K562 (cell line): ENCODE measurements at regions of chr15 and their contacts with region 1.

Region 1: GRCh38 chr15:65980824-65981456 is 111.6 kb downstream of the RAB11A start:
- DNase-seq: peak; percentile 62 to 73 (median 64)
- ATAC-seq: peak; percentile 86
- H3K4me3 ChIP-seq: no peak overlapping the region
- H3K27ac ChIP-seq: no peak overlapping the region
- H3K4me1 ChIP-seq: peaks cover 0 to 11% of the 10 kb centered on the region in 2 experiments; a peak in 2 of 5 replicates
- H3K27me3 ChIP-seq: peaks cover 26 to 59% of the 10 kb centered on the region in 2 experiments
- CTCF ChIP-seq: peak; percentile 67 to 81 (median 80)
- EP300 ChIP-seq: no peak
- POLR2A ChIP-seq: no peak
- RAD21 ChIP-seq: peak; percentile 48 to 73

Region 2: DNA sequence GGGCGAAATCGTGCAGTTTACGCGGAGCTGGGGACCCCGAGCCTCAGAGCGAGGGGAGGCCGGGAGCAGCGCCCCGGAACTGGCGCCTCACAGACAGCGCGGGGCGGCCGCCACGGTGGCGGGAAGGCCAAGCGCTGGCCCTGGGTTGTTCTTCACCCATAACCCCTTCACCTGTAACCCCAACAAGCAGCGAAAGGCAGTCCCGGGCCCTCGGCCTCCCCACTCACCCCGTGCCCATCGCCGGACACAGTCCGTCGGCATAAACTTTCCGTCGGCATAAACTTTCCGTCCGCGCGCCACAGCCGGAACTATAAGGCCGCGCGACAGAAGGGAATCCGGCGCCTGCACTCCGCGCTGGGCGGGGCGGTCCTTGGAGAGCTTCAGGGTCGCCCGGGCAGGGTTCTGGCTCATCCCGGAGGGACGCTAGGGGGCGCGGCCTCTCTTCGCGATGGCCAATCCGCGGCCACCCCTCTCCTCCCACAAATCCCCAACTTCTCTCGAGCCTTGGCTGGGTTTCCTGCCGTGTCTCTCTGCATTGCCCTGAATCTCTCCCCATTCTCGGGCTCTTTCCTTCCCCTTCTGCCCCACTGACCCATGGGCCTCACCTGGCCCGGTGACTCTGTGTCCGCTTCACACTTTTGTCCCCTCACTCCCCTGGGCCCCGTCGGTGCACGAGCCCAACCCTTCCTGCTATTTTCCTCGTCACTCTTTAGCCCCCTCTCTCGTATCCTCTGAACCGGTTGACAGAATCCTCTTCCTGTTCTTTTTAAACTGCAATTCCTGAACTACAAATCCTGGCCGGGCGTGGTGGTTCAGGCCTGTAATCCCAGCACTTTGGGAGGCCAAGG is 369.8 kb before region 1 on chr15 and contains the start of gene INTS14:
- CTCF ChIA-PET with region 1: no interaction called
- POLR2A ChIA-PET with region 1: no interaction called
- in situ Hi-C with region 1: no loop called
- intact Hi-C with region 1: loop called (anchors 10 kb)
- DNase-seq: peak; percentile 97 to 98 (median 97)
- ATAC-seq: peak; percentile 98
- H3K4me3 ChIP-seq: peak within 1 kb of the TSS; percentile 64
- H3K27ac ChIP-seq: peak within 1 kb of the TSS; percentile 89
- H3K4me1 ChIP-seq: peaks cover 8 to 21% of the 10 kb centered on the region in 2 experiments; a peak in 4 of 5 replicates
- H3K27me3 ChIP-seq: no peaks in the 10 kb centered on the region
- CTCF ChIP-seq: peak; percentile 72 to 85 (median 80)
- EP300 ChIP-seq: peak; percentile 63
- POLR2A ChIP-seq: peak; percentile 96
- RAD21 ChIP-seq: peak in 1 of 2 experiments; percentile 80
- polyA plus RNA-seq, gene INTS14: 40.6 to 64.0 TPM

Region 3: DNA sequence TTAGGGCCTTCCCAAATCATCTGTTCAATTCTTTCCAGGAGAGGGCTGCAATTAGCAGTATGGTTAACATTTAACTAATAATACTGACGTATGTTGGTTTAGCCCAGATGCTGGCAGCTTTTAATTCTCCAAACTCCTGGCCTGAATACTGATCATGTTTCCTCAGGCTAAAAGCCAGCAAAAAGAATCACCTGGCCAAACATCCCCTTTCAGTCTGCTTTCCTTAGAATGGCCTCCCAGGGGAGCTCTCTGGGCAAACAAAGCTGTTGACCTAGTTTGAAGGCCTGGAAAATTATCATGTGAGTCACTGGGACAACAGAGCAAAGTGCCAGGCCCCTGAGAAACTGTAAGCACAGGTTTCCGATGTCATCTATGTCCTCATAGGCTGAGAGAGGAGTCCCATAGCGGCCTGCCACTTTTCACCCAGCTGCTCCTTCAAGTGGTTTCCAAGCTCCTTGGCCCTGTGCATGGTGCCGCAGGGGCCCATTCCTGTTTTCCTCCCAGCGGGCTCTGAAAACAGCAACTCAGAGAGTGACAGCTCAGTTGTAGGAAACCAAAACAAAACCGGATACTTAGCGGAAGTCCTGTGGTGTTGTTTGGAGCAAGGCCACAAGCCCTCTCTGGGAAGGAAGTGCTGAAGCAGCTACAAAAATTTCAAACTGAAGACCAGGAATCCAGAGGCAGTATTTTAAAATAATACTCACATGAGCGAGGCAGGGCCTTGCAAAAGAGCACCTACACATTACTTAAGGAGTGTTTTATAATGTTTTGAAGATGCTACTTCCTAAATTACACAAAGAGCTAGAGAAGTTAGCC is 148.2 kb before region 1 on chr15:
- CTCF ChIA-PET with region 1: no interaction called
- POLR2A ChIA-PET with region 1: no interaction called
- in situ Hi-C with region 1: no loop called
- intact Hi-C with region 1: no loop called
- DNase-seq: peak; percentile 65 to 83 (median 70)
- ATAC-seq: peak; percentile 76
- H3K4me3 ChIP-seq: no peak overlapping the region; the same call in 1 of the 2 replicates
- H3K27ac ChIP-seq: peak overlapping the region; percentile 86
- H3K4me1 ChIP-seq: peaks cover 19 to 52% of the 10 kb centered on the region in 2 experiments
- H3K27me3 ChIP-seq: no peaks in the 10 kb centered on the region
- CTCF ChIP-seq: peak; percentile 37 to 63 (median 52); a peak in 4 of 6 replicates
- EP300 ChIP-seq: no peak; the same call in 1 of the 2 replicates
- POLR2A ChIP-seq: peak; percentile 61
- RAD21 ChIP-seq: peak; percentile 52 to 72

Region 4: DNA sequence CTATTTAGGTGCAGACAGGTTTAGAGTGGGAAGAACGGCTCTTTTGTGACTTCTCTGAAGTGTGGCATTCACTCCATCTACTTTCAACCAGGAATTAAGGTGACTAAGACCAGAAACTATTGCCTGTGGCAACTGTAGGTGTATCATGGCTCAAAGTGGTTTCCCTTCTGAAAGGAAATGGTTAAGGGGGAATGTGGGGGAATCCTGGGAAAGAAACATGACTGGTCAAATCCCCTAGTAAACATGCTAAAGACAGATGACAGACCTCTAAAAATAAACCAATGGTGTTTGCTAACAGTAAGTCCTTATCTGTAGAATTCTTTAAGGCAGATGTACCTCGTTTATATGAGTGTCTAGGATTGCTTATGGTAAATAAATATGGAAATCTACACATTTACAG is 215.7 kb after region 1 on chr15:
- CTCF ChIA-PET with region 1: no interaction called
- POLR2A ChIA-PET with region 1: no interaction called
- in situ Hi-C with region 1: no loop called
- intact Hi-C with region 1: loop called (anchors 10 kb)
- DNase-seq: no peak
- ATAC-seq: no peak
- H3K4me3 ChIP-seq: no peak overlapping the region
- H3K27ac ChIP-seq: no peak overlapping the region
- H3K4me1 ChIP-seq: no peaks in the 10 kb centered on the region; a peak in 1 of 5 replicates
- H3K27me3 ChIP-seq: peaks cover 14 to 48% of the 10 kb centered on the region in 2 experiments
- CTCF ChIP-seq: no peak
- EP300 ChIP-seq: no peak
- POLR2A ChIP-seq: no peak
- RAD21 ChIP-seq: no peak

Region 5: GRCh38 chr15:66212563-66212921 is 231.6 kb after region 1 on chr15:
- CTCF ChIA-PET with region 1: no interaction called
- POLR2A ChIA-PET with region 1: no interaction called
- in situ Hi-C with region 1: no loop called
- intact Hi-C with region 1: no loop called
- DNase-seq: no peak
- ATAC-seq: no peak
- H3K4me3 ChIP-seq: no peak overlapping the region
- H3K27ac ChIP-seq: no peak overlapping the region
- H3K4me1 ChIP-seq: peaks cover 2 to 3% of the 10 kb centered on the region in 2 experiments; a peak in 2 of 5 replicates
- H3K27me3 ChIP-seq: peaks cover 6 to 58% of the 10 kb centered on the region in 2 experiments; a peak in 3 of 5 replicates
- CTCF ChIP-seq: no peak
- EP300 ChIP-seq: no peak
- POLR2A ChIP-seq: no peak
- RAD21 ChIP-seq: no peak

Region 6: DNA sequence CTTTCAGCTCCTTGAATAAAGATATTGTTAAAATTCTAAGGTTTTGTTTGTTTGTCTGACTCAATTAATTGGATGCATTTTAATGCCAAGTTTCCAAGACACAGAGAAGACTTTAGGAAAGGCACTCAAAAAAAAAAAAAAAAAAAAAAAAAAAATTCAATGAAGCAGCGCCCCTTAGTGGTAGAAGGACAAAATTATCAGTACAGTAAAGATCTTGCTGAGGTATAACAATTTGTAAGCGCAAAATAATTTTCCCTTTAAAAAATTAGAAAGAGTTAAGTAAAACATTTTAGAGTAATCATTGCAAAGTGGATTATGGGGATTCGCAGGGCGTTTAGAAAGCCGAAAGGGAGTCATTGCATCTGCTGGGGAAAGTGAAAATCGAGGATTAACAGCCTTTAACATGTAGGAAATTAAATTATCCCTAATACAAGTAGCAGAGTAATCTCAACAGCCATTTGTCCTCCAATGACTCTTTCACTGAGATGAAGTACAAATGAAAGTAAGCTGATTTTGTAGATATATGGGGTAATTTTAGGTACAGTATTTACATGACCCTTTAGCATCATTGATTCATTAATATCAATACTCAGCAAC is 306.6 kb after region 1 on chr15:
- CTCF ChIA-PET with region 1: interaction called, 5 read pairs
- POLR2A ChIA-PET with region 1: no interaction called
- in situ Hi-C with region 1: no loop called
- intact Hi-C with region 1: loop called (anchors 5 kb)
- DNase-seq: peak; percentile 28 to 47 (median 38)
- ATAC-seq: peak; percentile 32; the same call in 1 of the 3 replicates
- H3K4me3 ChIP-seq: no peak overlapping the region
- H3K27ac ChIP-seq: no peak overlapping the region
- H3K4me1 ChIP-seq: peaks cover 4 to 7% of the 10 kb centered on the region in 2 experiments; a peak in 4 of 5 replicates
- H3K27me3 ChIP-seq: peaks cover 0 to 5% of the 10 kb centered on the region in 2 experiments; a peak in 2 of 5 replicates
- CTCF ChIP-seq: peak; percentile 42 to 76 (median 44); a peak in 4 of 6 replicates
- EP300 ChIP-seq: no peak
- POLR2A ChIP-seq: no peak
- RAD21 ChIP-seq: peak; percentile 41 to 42; a peak in 3 of 4 replicates